Caco-2 (cell line): ENCODE measurements at regions of chr3 and their contacts with region 1.

Region 1: DNA sequence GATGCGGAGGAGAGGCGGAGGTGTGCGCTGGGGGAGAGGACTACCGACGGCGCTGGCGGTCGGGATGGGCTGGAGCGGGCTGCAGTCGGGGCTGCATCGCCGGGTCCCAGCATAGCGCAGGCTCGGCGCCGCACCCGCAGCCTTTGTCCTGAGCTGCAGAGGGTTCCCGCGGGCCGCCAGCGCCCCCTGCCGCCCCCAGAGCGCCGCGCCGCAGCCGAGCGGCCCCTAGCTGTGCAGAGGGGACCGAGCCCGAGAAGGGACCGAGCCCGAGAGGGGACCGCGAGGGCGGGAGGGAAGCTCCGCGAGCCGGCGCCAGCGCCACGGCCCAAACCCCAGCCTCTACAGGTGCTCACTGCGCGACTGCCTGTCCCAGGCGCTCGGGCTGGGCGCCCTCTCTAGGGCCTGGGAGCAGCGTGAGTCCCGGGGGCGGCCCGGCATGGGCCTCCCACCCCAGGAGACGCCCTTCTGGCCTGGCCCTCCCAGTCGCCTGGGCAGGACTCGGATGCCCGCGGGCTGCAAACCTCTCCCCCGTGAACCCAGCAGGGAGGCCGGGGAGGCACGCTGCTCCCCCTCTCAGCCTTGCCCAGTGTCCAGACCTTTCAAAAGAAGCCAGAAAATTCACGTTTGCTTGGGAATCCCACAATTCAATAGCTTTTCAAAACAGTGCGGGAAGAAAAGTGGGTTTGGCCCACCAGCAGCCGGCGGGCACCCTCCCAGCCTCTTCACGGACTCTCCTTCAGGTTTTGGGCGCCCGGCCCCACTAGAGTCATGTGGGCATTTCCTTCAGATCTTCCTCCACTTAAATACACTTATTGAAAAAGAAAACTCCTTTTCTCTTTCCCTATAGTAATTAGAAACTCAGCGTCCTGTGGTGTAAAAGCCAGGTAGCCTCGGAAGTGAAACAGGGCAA is 134.7 kb downstream of the TPRA1 start:
- DNase-seq: peak; percentile 56 to 87
- H3K4me3 ChIP-seq: no peak overlapping the region
- H3K4me3 Mint-ChIP-seq: no peak overlapping the region
- H3K27ac Mint-ChIP-seq: no peak overlapping the region
- H3K4me1 ChIP-seq: peaks cover 4% of the 10 kb centered on the region
- H3K4me1 Mint-ChIP-seq: no peaks in the 10 kb centered on the region
- H3K27me3 ChIP-seq: no peaks in the 10 kb centered on the region; the same call in 1 of the 2 replicates
- H3K27me3 Mint-ChIP-seq: peaks cover 22% of the 10 kb centered on the region
- CTCF ChIP-seq: peak; percentile 63 to 95

Region 2: GRCh38 chr3:127254730-127255129 is 201.1 kb before region 1 on chr3:
- CTCF ChIA-PET with region 1: interaction called, 3 read pairs
- POLR2A ChIA-PET with region 1: no interaction called
- intact Hi-C with region 1: loop called (anchors 10 kb)
- DNase-seq: peak in 1 of 2 experiments; percentile 16
- H3K4me3 ChIP-seq: no peak overlapping the region
- H3K4me3 Mint-ChIP-seq: no peak overlapping the region
- H3K27ac Mint-ChIP-seq: no peak overlapping the region
- H3K4me1 ChIP-seq: no peaks in the 10 kb centered on the region
- H3K4me1 Mint-ChIP-seq: no peaks in the 10 kb centered on the region
- H3K27me3 ChIP-seq: no peaks in the 10 kb centered on the region; the same call in 1 of the 2 replicates
- H3K27me3 Mint-ChIP-seq: peaks cover 20% of the 10 kb centered on the region
- CTCF ChIP-seq: peak in 1 of 2 experiments; percentile 59

Region 3: DNA sequence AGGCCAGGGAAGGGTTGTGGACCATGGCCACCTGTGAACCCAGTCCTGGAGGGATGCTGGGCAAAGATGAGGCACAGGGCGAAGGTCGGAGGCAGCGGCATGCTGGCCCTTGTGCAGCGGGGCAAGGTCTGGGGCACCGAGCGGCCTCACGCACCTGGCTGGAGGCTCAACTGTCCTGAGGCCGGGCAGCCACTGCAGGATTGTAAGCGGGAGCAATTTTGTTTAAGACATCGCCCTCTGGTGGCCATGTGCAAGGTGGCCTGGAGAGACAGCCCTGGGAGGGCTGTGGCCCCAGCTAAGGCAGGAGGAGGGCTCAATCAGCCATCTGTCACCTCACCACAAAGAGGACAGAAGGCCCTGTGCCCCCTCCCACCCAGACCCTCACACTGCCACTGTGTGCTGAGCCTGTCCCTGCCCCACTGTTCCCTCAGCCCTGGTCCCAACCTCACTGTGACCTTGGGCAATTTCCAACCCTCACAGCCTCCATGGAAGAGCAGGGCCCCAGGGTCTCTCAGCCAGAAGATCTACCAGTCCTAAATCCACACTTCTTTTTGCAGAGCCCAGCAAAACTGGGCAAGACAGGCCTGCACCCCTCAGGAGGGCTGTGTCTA is 88.5 kb after region 1 on chr3:
- CTCF ChIA-PET with region 1: interaction called, 6 read pairs
- POLR2A ChIA-PET with region 1: no interaction called
- intact Hi-C with region 1: loop called (anchors 10 kb)
- DNase-seq: peak; percentile 72 to 74
- H3K4me3 ChIP-seq: no peak overlapping the region
- H3K4me3 Mint-ChIP-seq: no peak overlapping the region
- H3K27ac Mint-ChIP-seq: no peak overlapping the region
- H3K4me1 ChIP-seq: peaks cover 5% of the 10 kb centered on the region; the same call in 1 of the 2 replicates
- H3K4me1 Mint-ChIP-seq: no peaks in the 10 kb centered on the region
- H3K27me3 ChIP-seq: no peaks in the 10 kb centered on the region; the same call in 1 of the 2 replicates
- H3K27me3 Mint-ChIP-seq: peaks cover 4% of the 10 kb centered on the region
- CTCF ChIP-seq: peak; percentile 79 to 84